Esophagus muscularis mucosa (tissue), 4 donors: ENCODE measurements at regions of chr5 and their contacts with region 1.

Region 1: DNA sequence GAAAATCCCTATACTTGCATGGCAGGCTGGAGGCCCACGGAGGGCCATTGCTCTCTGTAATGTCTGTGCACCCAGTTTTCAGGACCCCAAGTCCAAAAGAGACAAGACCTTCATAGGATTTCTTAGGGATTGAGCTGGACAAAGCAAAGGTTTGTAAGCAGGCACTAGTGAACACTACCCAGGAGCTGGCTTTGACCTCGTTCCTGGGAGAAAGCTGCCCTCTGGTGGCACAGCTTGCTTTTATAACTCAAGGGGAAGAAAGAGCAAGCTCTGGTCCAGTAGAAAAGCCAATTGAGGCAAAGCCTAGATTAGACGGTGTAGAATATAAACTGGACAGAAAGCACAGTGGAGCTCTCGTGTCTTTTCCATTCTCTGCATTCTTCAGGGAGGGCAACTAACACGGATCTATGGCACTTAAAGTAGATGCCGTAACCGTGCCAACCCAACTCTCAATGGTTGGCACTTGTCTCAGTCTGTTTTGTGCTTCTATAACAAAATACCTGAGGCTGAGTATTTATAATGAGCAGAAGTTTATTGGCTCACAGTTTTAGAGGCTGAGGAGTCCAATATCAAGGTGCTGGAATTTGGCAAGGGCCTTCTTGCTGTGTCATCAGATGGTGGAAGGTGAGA is 7.9 kb downstream of the GABRP start:
- DNase-seq: no peak
- H3K4me3 ChIP-seq: no peak overlapping the region
- H3K27ac ChIP-seq: no peak overlapping the region
- H3K4me1 ChIP-seq: peaks cover 0 to 10% (median 0%) of the 10 kb centered on the region in 4 donors
- H3K27me3 ChIP-seq: no peaks in the 10 kb centered on the region
- CTCF ChIP-seq: peak; percentile 43 to 63 (median 54)
- EP300 ChIP-seq: no peak
- POLR2A ChIP-seq: no peak

Region 2: GRCh38 chr5:170312666-170313065 is 478.8 kb before region 1 on chr5:
- intact Hi-C with region 1: no loop called
- DNase-seq: no peak
- H3K4me3 ChIP-seq: no peak overlapping the region
- H3K27ac ChIP-seq: no peak overlapping the region
- H3K4me1 ChIP-seq: peaks cover 24 to 49% (median 34%) of the 10 kb centered on the region in 4 donors
- H3K27me3 ChIP-seq: peaks cover 0 to 13% (median 0%) of the 10 kb centered on the region in 4 donors
- CTCF ChIP-seq: no peak
- EP300 ChIP-seq: no peak
- POLR2A ChIP-seq: no peak

Region 3: DNA sequence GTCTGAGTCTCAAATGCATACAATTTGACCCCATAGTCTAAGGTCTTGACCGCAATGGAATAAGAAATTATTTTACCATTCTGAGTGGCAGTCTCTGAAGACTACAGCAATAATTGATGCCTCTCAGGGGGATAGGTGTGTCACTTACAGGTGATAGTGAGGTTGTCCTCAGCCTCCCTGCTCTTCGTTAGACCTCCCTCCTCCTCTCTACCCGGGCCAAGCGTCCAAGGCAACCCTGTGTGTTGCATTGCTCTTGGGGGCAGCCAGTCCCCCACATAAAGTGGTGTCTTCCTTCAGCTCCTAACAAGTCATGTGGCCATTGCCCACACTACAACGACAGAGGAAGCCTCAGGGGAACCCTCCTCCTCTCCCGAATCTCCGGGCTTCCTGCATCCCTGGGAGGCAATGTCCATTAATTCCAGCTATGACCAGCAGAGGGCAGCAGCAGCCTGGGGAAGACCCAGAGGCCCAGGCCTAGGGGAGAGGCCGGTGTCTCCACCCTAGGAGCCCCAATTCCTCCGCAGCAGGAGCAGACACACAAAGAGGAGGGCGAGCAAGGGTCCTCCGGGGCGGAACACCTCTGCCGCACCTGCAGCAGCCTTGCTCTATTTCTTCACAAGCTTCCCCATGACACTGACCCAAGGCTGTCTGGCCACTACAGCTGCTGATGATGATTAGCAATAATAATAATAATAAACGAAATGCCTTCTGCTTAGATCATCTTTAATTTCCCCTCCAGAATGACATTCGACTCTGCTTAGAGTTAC is 152.8 kb before region 1 on chr5:
- intact Hi-C with region 1: loop called (anchors 10 kb)
- DNase-seq: no peak
- H3K4me3 ChIP-seq: no peak overlapping the region
- H3K27ac ChIP-seq: no peak overlapping the region
- H3K4me1 ChIP-seq: peaks cover 0 to 11% (median 5%) of the 10 kb centered on the region in 4 donors
- H3K27me3 ChIP-seq: peaks cover 0 to 22% (median 0%) of the 10 kb centered on the region in 4 donors
- CTCF ChIP-seq: peak; percentile 63 to 94 (median 73)
- EP300 ChIP-seq: no peak
- POLR2A ChIP-seq: no peak

Region 4: DNA sequence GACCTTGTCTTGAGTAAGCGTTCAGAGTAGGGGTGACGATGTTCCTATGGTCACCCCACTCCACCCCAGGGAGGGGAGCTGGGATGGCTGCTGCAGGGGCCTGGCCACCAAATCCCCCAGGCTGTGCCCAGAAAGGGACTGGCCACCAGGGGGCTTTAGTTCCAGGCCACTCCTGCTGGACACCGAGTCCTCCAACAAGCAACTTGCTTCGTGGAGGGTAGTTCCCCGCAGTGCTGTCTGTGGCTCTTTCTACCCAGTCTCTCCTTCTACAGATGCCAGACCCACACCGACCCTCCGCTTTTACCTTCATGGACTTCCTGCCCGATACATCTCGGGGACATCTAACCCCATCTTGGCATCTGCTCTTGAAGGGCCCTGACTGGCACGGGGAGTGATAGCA is 43.6 kb before region 1 on chr5:
- intact Hi-C with region 1: loop called (anchors 1 kb)
- DNase-seq: peak; percentile 88
- H3K4me3 ChIP-seq: no peak overlapping the region
- H3K27ac ChIP-seq: no peak overlapping the region
- H3K4me1 ChIP-seq: peaks cover 31 to 58% (median 40%) of the 10 kb centered on the region in 4 donors
- H3K27me3 ChIP-seq: peaks cover 0 to 49% (median 0%) of the 10 kb centered on the region in 4 donors
- CTCF ChIP-seq: peak in 1 of 3 experiments; percentile 11
- EP300 ChIP-seq: no peak
- POLR2A ChIP-seq: no peak